Activated CD4-positive, alpha-beta T cell treated with anti-CD3 and anti-CD28 coated beads, Interleukin-2, amount 10 ng/mL, durations not matched to agents 24 days and 14 days (primary cell): ENCODE measurements at regions of chr9 and their contacts with region 1.

Region 1: DNA sequence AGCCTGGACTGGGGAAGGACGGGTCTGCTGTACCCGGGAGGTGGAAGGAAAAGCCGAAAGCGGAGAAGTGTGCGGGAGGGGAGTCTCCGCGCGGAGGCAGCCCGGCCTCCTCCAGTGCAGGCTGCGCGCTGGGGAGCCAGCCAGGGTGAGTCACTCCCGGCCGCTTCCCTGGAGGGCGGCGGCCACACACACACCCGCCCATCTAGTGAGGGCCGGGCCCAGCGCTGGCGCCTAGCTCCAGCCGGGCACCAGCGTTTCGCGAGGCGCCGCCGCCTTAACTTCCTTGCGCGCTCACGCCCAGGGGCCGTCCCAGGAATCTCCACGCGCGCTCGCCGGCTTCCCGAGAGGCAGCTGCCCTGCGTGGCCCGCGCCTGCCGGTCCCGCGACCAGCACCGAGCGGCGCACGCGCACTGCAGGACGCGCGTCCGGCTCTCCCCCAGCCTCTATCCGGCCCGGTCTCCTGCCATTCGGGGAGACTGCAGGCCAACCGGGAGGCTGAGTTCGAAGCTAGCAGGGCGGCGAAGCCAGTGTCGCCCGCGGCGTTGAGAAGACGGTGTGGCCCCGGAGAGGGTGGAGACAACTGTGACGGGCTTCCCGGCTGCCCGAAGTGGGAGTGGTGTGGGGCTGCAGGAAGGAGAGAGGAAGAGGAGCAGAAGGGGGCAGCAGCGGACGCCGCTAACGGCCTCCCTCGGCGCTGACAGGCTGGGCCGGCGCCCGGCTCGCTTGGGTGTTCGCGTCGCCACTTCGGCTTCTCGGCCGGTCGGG is at the start of gene JAK2:
- DNase-seq: peak; percentile 96
- H3K4me3 Mint-ChIP-seq: no peak within 1 kb of the TSS
- H3K27ac Mint-ChIP-seq: peak within 1 kb of the TSS; percentile 97
- H3K4me1 Mint-ChIP-seq: peaks cover 46% of the 10 kb centered on the region
- H3K27me3 Mint-ChIP-seq: no peaks in the 10 kb centered on the region
- total RNA-seq, gene JAK2: 29.3 and 29.9 TPM in 2 replicates

Region 2: GRCh38 chr9:4604678-4605095 is 380.1 kb before region 1 on chr9:
- intact Hi-C with region 1: loop called (anchors 5 kb)
- DNase-seq: peak; percentile 91
- H3K4me3 Mint-ChIP-seq: no peak overlapping the region
- H3K27ac Mint-ChIP-seq: no peak overlapping the region
- H3K4me1 Mint-ChIP-seq: peaks cover 14% of the 10 kb centered on the region
- H3K27me3 Mint-ChIP-seq: peaks cover 1% of the 10 kb centered on the region

Region 3: DNA sequence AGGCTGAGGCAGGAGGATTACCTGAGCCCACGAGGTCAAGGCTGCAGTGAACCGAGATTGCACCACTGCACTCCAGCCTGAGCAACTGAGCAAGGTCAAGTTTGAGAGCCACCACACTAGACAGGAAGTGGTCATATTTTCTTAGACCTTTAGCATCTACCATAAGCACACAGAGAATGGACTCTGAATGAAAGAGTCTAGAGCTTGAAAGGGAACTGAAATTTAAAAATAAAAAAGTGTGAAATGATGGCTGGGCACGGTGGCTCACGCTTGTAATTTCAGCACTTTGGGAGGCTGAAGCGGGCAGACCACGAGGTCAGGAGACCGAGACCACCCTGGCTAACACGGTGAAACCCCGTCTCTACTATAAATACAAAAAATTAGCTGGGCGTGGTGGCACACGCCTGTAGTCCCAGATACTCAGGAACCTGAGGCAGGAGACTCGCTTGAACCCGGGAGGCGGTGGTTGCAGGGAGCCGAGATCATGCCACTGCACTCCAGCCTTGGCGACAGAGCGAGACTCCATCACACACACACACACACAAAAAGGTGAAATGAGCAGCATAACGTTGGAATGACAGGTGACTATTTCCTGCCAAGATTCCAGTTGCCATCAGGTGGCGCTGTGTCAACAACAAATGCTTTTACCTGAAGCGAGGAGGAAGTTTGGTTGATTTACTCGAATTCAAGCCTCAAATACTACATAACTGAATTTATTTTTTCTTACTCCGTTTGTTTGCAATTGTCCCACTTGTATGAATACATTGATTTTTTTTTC is 222.5 kb before region 1 on chr9:
- intact Hi-C with region 1: loop called (anchors 1 kb)
- DNase-seq: peak; percentile 94
- H3K4me3 Mint-ChIP-seq: peak overlapping the region; percentile 63
- H3K27ac Mint-ChIP-seq: peak overlapping the region; percentile 22
- H3K4me1 Mint-ChIP-seq: peaks cover 16% of the 10 kb centered on the region
- H3K27me3 Mint-ChIP-seq: peaks cover 6% of the 10 kb centered on the region

Region 4: DNA sequence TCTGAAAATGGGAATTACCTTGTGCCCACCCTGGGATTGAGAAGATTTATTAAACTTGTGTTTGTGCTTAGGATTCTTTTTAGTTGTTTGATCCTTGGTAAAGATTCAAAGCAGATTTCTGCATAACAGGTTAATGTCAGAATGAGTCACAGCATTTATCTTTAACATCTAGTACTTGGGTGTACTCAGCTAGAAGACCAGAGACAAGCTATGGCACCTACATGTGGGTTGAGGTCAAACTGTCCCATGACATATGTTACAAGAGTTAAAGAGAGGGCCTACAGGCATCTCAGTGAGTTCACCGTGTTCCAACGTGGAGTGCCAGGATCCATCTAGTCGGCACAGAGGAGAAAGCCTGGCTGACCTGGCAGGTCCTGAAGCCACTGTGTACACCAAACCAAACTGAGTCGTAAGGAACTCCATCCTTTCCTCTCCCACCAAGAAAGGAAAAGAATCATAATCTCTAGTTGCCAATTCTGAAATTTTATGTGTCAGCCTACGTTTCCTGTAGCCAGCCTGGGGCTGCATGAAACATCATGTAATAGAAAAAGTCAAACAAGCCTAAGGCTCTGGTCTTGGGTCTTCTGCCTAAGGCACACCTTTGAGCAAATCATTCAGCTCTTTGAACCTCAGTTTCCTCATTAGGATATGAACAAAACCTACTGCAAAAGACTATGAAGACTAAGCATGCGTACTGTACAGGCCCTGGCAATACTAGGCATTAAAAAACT is 118.4 kb before region 1 on chr9:
- intact Hi-C with region 1: loop called (anchors 2 kb)
- DNase-seq: peak; percentile 67
- H3K4me3 Mint-ChIP-seq: peak overlapping the region; percentile 35
- H3K27ac Mint-ChIP-seq: peak overlapping the region; percentile 81
- H3K4me1 Mint-ChIP-seq: peaks cover 32% of the 10 kb centered on the region
- H3K27me3 Mint-ChIP-seq: no peaks in the 10 kb centered on the region

Region 5: GRCh38 chr9:5437254-5438216 is 452.7 kb after region 1 on chr9 and contains the start of gene PLGRKT:
- intact Hi-C with region 1: loop called (anchors 2 kb)
- DNase-seq: peak; percentile 97
- H3K4me3 Mint-ChIP-seq: peak within 1 kb of the TSS; percentile 93
- H3K27ac Mint-ChIP-seq: peak within 1 kb of the TSS; percentile 97
- H3K4me1 Mint-ChIP-seq: peaks cover 52% of the 10 kb centered on the region
- H3K27me3 Mint-ChIP-seq: no peaks in the 10 kb centered on the region
- total RNA-seq, gene PLGRKT: 53.0 and 54.4 TPM in 2 replicates

Region 6: DNA sequence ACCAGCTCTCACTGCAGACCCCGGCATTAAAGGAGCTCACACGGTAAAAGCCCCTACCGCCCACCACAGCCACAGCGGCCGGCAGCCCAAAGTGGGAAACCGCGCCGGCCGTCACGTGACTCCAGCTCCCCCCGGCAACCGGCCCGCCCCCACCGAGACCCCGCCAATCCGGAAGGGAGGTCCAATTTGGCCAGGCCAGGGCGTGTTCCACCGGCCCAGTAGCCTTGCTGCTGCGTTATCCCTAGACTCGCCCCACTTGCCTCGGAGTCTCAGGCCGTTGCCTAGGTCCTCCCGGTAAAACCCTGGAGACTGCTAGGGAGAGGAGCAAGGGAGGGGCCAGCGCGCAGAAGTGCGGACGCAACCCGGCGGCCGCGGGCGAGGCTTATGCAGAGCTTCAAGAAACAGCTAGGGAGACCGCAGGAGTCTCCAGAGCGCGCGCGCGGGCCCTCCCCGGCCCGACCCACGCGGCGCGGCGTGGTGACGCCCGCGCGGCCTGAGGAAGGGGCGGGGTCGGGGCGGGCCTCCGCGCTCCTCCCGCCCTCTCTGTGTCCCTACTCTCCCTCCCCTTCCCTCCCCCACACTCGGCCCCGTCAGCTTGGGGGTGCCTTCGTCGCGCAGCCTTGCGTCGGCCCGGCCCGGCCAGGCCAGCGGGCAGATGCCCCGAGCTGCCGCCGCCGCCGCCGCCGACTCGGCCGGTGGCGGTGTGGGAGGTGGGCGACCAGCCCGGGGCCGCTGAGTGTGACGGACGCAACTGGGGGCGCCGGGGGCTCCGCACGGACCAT is 643.9 kb after region 1 on chr9 and contains the start of gene RIC1:
- intact Hi-C with region 1: loop called (anchors 5 kb)
- DNase-seq: peak; percentile 97
- H3K4me3 Mint-ChIP-seq: peak within 1 kb of the TSS; percentile 100
- H3K27ac Mint-ChIP-seq: peak within 1 kb of the TSS; percentile 99
- H3K4me1 Mint-ChIP-seq: peaks cover 49% of the 10 kb centered on the region
- H3K27me3 Mint-ChIP-seq: no peaks in the 10 kb centered on the region
- total RNA-seq, gene RIC1: 20.2 and 20.4 TPM in 2 replicates